Activated T-helper 2 cell treated with anti-CD3 and anti-CD28 coated beads, Interferon-gamma antibody, Interleukin-2, Interleukin-4, amounts not matched to agents 10 μg/mL and 5 μg/mL and 100 μg/mL, durations not matched to agents 14 hours and 24 hours and 36 hours (primary cell): ENCODE measurements at regions of chr16 and their contacts with region 1.

Region 1: GRCh38 chr16:81314603-81315270 is at the start of gene GAN:
- DNase-seq: peak; percentile 94
- H3K4me3 Mint-ChIP-seq: peak within 1 kb of the TSS; percentile 90
- H3K27ac Mint-ChIP-seq: peak within 1 kb of the TSS; percentile 72
- H3K4me1 Mint-ChIP-seq: peaks cover 38% of the 10 kb centered on the region
- H3K27me3 Mint-ChIP-seq: no peaks in the 10 kb centered on the region
- total RNA-seq, gene GAN: 14.6 and 15.3 TPM in 2 replicates

Region 2: GRCh38 chr16:81006814-81007696 is 307.7 kb before region 1 on chr16 and contains the starts of genes CENPN and CMC2:
- intact Hi-C with region 1: loop called (anchors 10 kb)
- DNase-seq: peak; percentile 98
- H3K4me3 Mint-ChIP-seq: peak within 1 kb of the TSS; percentile 96
- H3K27ac Mint-ChIP-seq: peak within 1 kb of the TSS; percentile 100
- H3K4me1 Mint-ChIP-seq: peaks cover 46% of the 10 kb centered on the region
- H3K27me3 Mint-ChIP-seq: no peaks in the 10 kb centered on the region
- total RNA-seq, gene CENPN: 57.4 and 57.9 TPM in 2 replicates
- total RNA-seq, gene CMC2: 130 and 136 TPM in 2 replicates

Region 3: DNA sequence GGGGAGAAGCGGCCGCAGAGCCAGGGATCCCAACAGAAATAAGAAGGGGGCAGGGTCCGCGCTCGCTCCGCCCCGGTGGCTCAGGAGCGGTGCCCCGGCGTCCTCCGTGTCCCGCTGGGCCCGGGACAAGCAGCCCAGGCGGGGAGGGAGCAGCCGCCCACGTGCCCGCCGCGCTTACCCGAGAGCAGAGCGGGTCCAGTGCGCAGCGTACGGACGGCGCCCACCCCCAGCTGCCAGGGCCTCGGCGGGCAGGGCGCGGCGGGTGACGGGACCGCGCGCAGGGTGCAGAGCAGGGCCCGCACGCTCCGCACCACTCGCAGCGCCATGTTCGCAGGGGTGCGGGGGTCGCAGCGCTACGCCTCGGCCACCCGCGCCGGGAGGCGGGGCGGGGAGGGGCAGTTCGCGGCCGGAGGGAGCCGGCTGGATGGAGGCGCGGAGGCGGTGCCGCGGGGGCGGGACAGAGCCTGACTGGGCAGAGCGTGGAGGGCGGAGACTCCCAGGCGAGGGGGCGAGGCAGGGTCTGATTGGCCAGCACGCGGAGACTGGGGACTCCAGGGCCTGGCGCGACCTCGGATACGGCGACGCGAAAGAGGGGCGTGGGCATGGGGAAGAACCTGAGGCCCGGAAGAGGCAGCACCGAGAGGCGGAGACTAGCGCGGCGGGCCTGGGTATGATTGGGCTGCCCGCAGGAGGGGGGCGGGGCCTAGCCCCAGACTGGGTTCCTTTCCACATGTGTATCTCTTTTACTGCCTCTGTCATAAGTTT is 218.6 kb before region 1 on chr16 and contains the start of gene GCSH:
- intact Hi-C with region 1: loop called (anchors 10 kb)
- DNase-seq: peak; percentile 99
- H3K4me3 Mint-ChIP-seq: peak within 1 kb of the TSS; percentile 77
- H3K27ac Mint-ChIP-seq: peak within 1 kb of the TSS; percentile 61
- H3K4me1 Mint-ChIP-seq: peaks cover 8% of the 10 kb centered on the region
- H3K27me3 Mint-ChIP-seq: no peaks in the 10 kb centered on the region
- total RNA-seq, gene GCSH: 23.2 and 25.7 TPM in 2 replicates

Region 4: GRCh38 chr16:81335669-81336068 is 20.9 kb after region 1 on chr16:
- intact Hi-C with region 1: loop called (anchors 2 kb)
- DNase-seq: no peak
- H3K4me3 Mint-ChIP-seq: no peak overlapping the region
- H3K27ac Mint-ChIP-seq: peak overlapping the region; percentile 73
- H3K4me1 Mint-ChIP-seq: peaks cover 8% of the 10 kb centered on the region
- H3K27me3 Mint-ChIP-seq: no peaks in the 10 kb centered on the region

Region 5: DNA sequence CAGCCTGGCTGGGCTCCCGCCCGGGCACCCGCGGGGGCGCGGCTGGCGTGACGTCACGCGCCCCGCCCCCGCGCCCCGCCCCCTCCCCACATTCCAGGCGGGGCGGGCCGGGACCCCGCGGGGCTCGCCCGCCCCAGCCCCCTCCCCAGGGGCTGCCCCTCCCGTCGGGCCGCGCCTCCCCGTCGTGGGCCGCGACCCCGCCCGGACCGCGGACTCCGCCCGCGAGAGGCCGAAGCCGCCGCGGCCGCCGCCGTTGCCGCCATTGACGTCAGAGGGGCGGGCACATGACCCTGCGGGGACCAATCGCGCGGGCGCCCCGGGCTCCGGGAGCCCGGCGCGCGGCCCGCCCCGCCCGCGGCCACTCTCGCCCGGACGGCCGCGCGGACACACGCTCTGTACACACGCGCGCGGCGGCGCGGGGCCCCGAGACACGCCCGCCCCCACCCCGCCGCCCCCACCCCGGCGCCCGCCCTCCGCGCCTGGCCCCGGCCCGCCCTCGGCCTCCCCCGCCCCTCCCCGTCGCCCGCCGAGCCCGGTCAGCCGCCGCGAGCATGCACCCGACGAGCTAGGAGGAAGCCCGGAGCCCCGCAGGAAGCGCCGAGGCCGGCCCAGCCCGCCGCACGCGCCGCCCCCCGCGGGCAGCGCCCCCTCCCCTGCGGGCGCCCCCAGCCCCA is 129.8 kb after region 1 on chr16 and contains the start of gene CMIP:
- intact Hi-C with region 1: loop called (anchors 10 kb)
- DNase-seq: peak; percentile 77
- H3K4me3 Mint-ChIP-seq: peak within 1 kb of the TSS; percentile 90
- H3K27ac Mint-ChIP-seq: peak within 1 kb of the TSS; percentile 83
- H3K4me1 Mint-ChIP-seq: peaks cover 38% of the 10 kb centered on the region
- H3K27me3 Mint-ChIP-seq: peaks cover 29% of the 10 kb centered on the region
- total RNA-seq, gene CMIP: 68.0 and 76.9 TPM in 2 replicates

Region 6: DNA sequence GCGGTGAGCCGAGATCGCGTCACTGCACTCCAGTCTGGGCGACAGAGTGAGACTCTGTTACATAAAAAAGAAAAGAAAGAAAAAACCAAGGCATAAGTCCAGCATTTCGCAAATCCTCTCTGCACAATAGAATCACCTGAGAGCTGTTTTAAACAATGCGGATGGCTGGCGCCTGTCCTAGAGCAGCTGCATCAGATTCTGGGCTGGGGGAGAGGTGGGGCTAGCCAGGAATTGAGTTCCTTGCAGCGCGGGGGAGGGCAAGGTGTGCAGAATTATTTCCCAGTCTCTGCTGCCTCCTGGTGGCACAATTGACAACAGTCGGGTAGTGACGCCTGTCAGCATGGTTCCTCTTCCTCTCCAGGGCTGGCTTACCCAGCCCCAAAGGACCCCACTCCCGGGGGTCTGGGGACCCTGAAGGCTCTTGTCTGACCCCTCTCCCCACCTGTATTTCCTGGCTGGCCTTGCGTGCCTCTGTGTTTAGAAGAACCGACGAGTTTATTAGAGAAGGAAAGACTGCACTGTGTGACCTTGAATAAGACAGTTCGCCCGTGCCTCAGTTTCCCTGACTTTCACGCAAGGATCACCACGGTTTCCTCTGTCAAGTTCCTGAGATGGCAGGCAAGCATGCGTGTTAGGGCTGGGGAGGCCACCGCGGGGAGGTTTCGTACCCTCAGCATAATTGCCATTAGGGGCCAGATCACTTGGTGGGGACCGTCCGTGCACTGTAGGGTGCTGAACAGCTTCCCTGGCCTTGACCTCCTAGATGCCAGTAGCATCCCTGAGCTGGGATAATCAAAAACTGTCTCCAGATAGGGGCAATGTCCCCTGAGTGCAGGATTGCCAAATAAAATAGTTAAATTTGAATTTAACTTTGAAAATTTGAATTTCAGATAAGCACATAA is 423.4 kb after region 1 on chr16:
- intact Hi-C with region 1: loop called (anchors 5 kb)
- DNase-seq: peak; percentile 75
- H3K4me3 Mint-ChIP-seq: peak overlapping the region; percentile 24
- H3K27ac Mint-ChIP-seq: no peak overlapping the region
- H3K4me1 Mint-ChIP-seq: peaks cover 11% of the 10 kb centered on the region
- H3K27me3 Mint-ChIP-seq: peaks cover 4% of the 10 kb centered on the region